AG04450 (cell line): ENCODE measurements at regions of chr1 and their contacts with region 1.

Region 1: GRCh38 chr1:89762779-89763648 is 57.8 kb upstream of the LRRC8D start:
- DNase-seq: peak; percentile 73
- H3K4me3 ChIP-seq: peak overlapping the region; percentile 70
- H3K27ac ChIP-seq: no peak overlapping the region
- H3K27me3 ChIP-seq: no peaks in the 10 kb centered on the region
- CTCF ChIP-seq: peak; percentile 100

Region 2: GRCh38 chr1:89608319-89608983 is 154.6 kb before region 1 on chr1:
- CTCF ChIA-PET with region 1: interaction called, 33 read pairs
- POLR2A ChIA-PET with region 1: no interaction called
- DNase-seq: no peak
- H3K4me3 ChIP-seq: no peak overlapping the region
- H3K27ac ChIP-seq: no peak overlapping the region
- H3K27me3 ChIP-seq: no peaks in the 10 kb centered on the region
- CTCF ChIP-seq: no peak

Region 3: GRCh38 chr1:89646259-89646658 is 116.8 kb before region 1 on chr1:
- CTCF ChIA-PET with region 1: interaction called, 15 read pairs
- POLR2A ChIA-PET with region 1: no interaction called
- DNase-seq: no peak
- H3K4me3 ChIP-seq: no peak overlapping the region
- H3K27ac ChIP-seq: no peak overlapping the region
- H3K27me3 ChIP-seq: no peaks in the 10 kb centered on the region
- CTCF ChIP-seq: no peak

Region 4: DNA sequence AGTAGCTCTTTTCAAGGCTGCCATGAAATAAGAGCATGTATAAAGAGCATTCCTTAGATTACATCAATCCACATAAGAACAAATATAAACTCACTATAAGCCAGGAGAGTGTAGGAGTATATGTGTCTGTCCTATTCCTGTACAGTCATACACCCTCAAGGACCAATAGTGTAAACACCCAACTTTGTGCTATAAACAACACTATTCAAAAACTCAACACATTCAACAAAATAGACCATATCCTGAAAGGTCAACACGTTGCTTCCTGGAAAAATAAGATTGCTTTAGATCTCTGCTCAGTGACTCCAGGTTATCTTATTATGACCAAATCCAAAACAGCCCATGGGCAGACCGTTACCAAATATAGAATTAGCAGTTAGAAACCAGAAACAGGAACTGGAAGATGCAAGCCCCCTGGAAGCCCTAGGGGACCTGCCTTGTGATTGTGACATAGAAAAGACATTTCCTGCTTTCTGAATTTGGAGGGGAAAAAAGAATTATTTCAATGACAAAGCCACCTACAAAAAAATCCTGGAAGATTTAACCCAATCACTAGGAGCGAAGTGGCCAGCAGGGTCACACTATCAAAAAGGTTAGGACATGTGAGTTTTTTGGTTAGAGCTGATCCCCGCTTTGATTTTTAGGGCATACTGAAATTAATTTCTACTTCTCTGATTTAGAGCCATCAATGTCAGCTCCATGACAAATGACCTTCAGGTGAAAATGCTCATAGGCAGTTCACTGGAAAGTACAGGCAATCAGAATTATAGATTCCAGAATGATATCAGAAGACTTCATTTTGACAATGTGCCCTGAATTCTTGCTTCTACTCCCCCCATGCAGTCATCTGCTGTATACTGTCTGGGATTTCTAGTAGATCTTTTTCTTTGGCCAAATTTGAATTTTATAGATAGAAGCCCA is 70.2 kb before region 1 on chr1:
- CTCF ChIA-PET with region 1: interaction called, 10 read pairs
- POLR2A ChIA-PET with region 1: no interaction called
- DNase-seq: peak; percentile 45
- H3K4me3 ChIP-seq: no peak overlapping the region
- H3K27ac ChIP-seq: no peak overlapping the region
- H3K27me3 ChIP-seq: no peaks in the 10 kb centered on the region
- CTCF ChIP-seq: no peak

Region 5: GRCh38 chr1:89780721-89781120 is 17.7 kb after region 1 on chr1:
- CTCF ChIA-PET with region 1: interaction called, 36 read pairs
- POLR2A ChIA-PET with region 1: interaction called, 4 read pairs
- DNase-seq: no peak
- H3K4me3 ChIP-seq: no peak overlapping the region
- H3K27ac ChIP-seq: no peak overlapping the region
- H3K27me3 ChIP-seq: peaks cover 6% of the 10 kb centered on the region
- CTCF ChIP-seq: peak; percentile 57